ENCODE measurements at regions of chr2 and their contacts with region 1.

Region 1: DNA sequence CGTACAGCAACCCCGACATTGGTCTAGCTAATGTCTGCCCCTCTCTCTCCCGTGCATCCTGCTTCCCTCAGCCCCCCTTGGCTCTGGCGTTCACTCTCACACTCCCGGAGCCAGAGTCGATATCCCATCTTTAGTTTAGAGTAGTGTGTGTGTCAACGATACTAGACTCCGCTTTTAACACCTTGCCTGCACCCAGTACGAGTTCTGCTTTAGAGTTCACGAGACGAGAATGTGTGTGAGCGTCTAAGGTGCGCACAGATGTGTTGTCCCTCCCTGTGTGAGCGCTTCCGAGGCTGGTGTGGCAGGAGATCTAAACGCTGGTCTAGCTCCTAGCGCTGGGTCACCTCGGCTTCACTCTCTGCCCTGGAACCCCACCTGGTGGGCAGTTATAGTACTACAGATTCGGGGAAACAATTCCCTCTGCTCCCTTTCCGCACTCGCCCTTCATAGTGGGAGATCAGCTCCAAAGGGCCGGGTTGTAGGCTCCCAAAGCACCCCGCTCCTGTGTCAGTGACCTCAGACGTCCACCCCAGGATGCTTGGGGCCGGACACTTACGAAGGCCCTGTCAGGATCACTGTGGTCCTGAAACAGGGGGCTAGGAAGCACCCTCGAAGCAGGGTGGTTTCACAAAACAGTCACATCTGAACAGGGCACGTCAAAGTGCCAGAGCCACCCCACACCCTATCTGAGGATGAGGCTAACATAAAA is 2.6 kb upstream of the CYP26B1 start:
- DNase-seq: peak; percentile 75
- H3K4me3 Mint-ChIP-seq: peak overlapping the region; percentile 62
- H3K27ac Mint-ChIP-seq: no peak overlapping the region
- H3K4me1 Mint-ChIP-seq: peaks cover 35% of the 10 kb centered on the region
- H3K27me3 Mint-ChIP-seq: peaks cover 63% of the 10 kb centered on the region

Region 2: GRCh38 chr2:71530641-71531332 is 619.5 kb before region 1 on chr2:
- CTCF ChIA-PET with region 1: interaction called, 4 read pairs
- POLR2A ChIA-PET with region 1: no interaction called
- intact Hi-C with region 1: loop called (anchors 1 kb)
- DNase-seq: peak; percentile 28
- H3K4me3 Mint-ChIP-seq: no peak overlapping the region
- H3K27ac Mint-ChIP-seq: no peak overlapping the region
- H3K4me1 Mint-ChIP-seq: peaks cover 2% of the 10 kb centered on the region
- H3K27me3 Mint-ChIP-seq: peaks cover 28% of the 10 kb centered on the region

Region 3: GRCh38 chr2:71545572-71546274 is 604.6 kb before region 1 on chr2:
- CTCF ChIA-PET with region 1: interaction called, 23 read pairs
- POLR2A ChIA-PET with region 1: no interaction called
- intact Hi-C with region 1: loop called (anchors 2 kb)
- DNase-seq: peak; percentile 58
- H3K4me3 Mint-ChIP-seq: peak overlapping the region; percentile 42
- H3K27ac Mint-ChIP-seq: no peak overlapping the region
- H3K4me1 Mint-ChIP-seq: peaks cover 9% of the 10 kb centered on the region
- H3K27me3 Mint-ChIP-seq: peaks cover 19% of the 10 kb centered on the region

Region 4: DNA sequence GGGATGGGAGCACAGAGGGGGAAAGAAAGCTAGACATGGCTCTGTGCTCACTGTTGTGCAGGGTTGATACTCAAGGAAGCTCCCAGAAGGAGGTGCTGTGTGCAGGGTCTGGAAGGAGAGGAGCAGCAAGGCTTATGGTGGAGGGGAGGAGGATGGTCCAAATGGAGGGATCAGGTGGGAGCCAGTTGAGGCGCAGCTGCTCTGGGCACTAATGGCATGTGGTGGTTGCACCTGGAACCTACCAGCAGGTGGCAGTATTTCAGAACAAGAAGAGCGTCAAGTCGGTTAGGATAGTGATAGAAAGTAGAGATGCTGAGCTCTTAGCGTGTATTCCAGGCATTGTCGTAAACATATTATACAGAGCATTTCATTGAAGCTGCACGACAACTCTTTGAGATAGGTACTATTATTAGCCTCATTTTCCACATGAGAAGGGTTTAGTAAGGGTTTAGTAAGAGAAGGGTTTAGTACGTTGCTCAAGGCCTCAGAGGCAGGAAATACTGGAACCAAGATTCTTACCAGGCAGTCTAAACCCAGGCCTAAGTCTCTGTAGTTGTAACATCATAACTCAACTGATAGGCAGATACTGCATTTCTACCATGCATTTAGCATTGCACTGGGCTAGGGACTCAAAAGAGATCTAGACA is 226.3 kb before region 1 on chr2:
- CTCF ChIA-PET with region 1: interaction called, 68 read pairs
- POLR2A ChIA-PET with region 1: no interaction called
- intact Hi-C with region 1: loop called (anchors 1 kb)
- DNase-seq: peak; percentile 63
- H3K4me3 Mint-ChIP-seq: no peak overlapping the region
- H3K27ac Mint-ChIP-seq: no peak overlapping the region
- H3K4me1 Mint-ChIP-seq: no peaks in the 10 kb centered on the region
- H3K27me3 Mint-ChIP-seq: no peaks in the 10 kb centered on the region

Region 5: DNA sequence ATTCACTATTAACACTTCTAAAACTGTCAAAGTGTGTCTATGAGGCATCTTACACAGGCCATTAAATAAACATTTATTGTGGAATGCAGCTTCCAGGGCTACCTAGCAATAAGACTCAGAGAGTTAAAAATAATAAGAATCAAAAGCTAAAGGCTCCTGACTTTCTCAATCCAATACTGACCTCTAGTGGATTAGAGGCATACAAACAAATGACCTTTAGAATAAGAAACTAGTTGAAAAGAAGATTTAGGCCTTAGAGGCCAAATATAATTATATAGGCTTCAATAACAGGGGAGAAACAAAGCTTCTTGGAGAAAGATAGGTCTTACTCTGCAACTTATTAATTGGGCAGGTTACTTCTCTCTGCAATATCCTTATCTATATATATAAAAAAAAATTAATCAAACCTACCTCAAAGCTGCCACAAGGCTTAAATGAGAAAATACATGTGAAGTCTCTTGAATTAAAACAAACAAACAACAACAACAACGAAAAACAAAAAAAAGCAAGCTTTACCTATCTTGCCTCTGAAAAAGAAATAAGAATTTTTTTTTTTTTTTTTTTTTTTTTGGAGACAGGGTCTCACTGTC is 429.4 kb after region 1 on chr2:
- CTCF ChIA-PET with region 1: interaction called, 9 read pairs
- POLR2A ChIA-PET with region 1: no interaction called
- intact Hi-C with region 1: loop called (anchors 1 kb)
- DNase-seq: no peak
- H3K4me3 Mint-ChIP-seq: no peak overlapping the region
- H3K27ac Mint-ChIP-seq: no peak overlapping the region
- H3K4me1 Mint-ChIP-seq: peaks cover 3% of the 10 kb centered on the region
- H3K27me3 Mint-ChIP-seq: no peaks in the 10 kb centered on the region

Region 6: GRCh38 chr2:72745679-72746368 is 595.5 kb after region 1 on chr2:
- CTCF ChIA-PET with region 1: interaction called, 8 read pairs
- POLR2A ChIA-PET with region 1: no interaction called
- intact Hi-C with region 1: loop called (anchors 10 kb)
- DNase-seq: no peak
- H3K4me3 Mint-ChIP-seq: no peak overlapping the region
- H3K27ac Mint-ChIP-seq: no peak overlapping the region
- H3K4me1 Mint-ChIP-seq: no peaks in the 10 kb centered on the region
- H3K27me3 Mint-ChIP-seq: no peaks in the 10 kb centered on the region

Region 7: GRCh38 chr2:72915907-72916742 is 765.8 kb after region 1 on chr2:
- CTCF ChIA-PET with region 1: interaction called, 3 read pairs
- POLR2A ChIA-PET with region 1: no interaction called
- intact Hi-C with region 1: loop called (anchors 5 kb)
- DNase-seq: peak; percentile 61
- H3K4me3 Mint-ChIP-seq: peak overlapping the region; percentile 66
- H3K27ac Mint-ChIP-seq: no peak overlapping the region
- H3K4me1 Mint-ChIP-seq: peaks cover 26% of the 10 kb centered on the region
- H3K27me3 Mint-ChIP-seq: peaks cover 73% of the 10 kb centered on the region